Activated T-helper 1 cell treated with anti-CD3 and anti-CD28 coated beads, Interleukin-12 subunit alpha, Interleukin-12 subunit beta, Interleukin-2, Interleukin-4 antibody, amounts not matched to agents 30 ng/mL and 10 ng/mL and 1 ng/mL, durations not matched to agents 14 hours and 24 hours and 36 hours (primary cell): ENCODE measurements at regions of chr1 and their contacts with region 1.

Region 1: DNA sequence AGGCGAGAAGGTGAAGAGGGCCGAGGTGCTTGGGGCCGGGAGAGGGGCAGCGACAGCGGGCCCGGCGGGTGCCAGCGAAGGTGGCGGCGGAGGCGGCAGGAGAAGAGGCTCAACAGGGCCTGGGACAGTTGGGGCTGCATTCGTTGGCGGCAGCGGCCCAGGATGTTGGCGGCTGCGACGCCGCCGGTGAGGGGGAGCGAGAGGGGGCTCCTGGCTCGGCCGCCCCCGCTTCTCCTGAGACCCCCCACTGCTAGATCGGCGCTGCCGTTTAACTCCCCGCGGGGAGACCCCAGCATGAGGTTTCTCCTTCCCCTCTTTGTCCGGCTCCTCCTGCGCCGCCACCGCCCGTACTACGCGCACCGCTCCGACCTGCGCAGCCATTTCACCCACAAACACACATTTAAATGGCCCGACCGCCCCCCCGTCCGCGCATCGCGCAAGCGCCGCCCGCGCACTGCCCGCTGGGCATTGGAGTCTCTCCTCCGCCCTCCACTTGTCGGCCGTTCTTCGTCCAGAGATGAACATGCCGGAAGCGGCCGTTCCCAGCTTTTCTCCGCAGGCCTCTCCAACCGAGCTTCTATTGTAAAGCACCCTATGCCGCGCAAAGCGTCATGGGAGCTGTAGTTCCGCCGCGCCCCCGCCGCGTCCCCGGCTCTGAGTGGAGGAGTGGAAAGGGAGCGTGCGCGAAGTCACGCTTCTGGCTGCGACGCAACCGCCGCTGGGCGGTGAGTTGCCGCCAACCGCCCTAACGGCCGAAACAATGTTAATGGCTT is at the start of gene RSBN1:
- DNase-seq: peak; percentile 99
- H3K4me3 Mint-ChIP-seq: peak within 1 kb of the TSS; percentile 96
- H3K27ac Mint-ChIP-seq: peak within 1 kb of the TSS; percentile 96
- H3K4me1 Mint-ChIP-seq: peaks cover 34% of the 10 kb centered on the region
- H3K27me3 Mint-ChIP-seq: no peaks in the 10 kb centered on the region
- total RNA-seq, gene RSBN1: 18.4 and 19.5 TPM in 2 replicates

Region 2: DNA sequence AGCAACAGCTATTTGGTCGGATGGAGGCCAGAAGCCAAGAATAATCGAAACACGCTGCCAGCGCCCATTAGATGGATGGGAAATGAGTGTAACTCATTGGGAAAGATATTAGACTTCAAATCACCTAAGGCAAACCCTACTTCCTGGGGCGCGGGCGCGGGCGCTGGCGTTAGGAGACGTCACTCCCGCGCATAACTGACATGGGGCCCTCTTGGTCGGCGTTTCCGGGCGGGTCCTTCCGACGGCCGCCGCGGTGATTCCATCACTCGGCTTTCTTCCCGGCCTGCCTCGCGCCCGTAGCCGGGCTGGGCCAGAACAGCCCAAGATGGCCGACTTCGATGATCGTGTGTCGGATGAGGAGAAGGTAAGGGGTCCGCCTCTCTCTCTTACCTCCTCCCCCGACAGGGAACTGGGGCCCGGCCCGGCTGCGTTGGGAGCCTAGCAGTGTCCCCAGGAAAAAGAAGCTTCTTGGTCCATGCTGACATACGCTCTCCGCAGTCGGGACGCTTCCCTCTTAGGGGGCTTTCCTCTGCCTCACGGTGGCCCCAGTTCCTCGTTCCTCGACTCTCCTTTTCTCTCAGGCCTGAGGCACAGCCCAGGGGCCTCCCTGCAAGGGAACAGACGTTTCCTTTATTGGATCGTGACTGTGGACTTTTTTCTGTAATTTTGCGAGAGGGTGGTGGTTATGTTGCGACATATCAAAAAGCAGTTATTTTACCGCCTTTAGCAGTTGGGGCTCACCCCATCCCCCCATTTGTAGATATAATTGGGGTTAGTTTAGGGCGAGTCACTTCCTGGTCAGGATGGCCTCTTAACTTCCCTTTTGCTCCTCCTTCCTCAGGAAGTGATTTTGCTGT is 1192.3 kb before region 1 on chr1 and contains the start of gene CAPZA1:
- intact Hi-C with region 1: loop called (anchors 5 kb)
- DNase-seq: peak; percentile 90
- H3K4me3 Mint-ChIP-seq: peak within 1 kb of the TSS; percentile 98
- H3K27ac Mint-ChIP-seq: peak within 1 kb of the TSS; percentile 98
- H3K4me1 Mint-ChIP-seq: peaks cover 48% of the 10 kb centered on the region
- H3K27me3 Mint-ChIP-seq: no peaks in the 10 kb centered on the region
- total RNA-seq, gene CAPZA1: 239 and 242 TPM in 2 replicates

Region 3: DNA sequence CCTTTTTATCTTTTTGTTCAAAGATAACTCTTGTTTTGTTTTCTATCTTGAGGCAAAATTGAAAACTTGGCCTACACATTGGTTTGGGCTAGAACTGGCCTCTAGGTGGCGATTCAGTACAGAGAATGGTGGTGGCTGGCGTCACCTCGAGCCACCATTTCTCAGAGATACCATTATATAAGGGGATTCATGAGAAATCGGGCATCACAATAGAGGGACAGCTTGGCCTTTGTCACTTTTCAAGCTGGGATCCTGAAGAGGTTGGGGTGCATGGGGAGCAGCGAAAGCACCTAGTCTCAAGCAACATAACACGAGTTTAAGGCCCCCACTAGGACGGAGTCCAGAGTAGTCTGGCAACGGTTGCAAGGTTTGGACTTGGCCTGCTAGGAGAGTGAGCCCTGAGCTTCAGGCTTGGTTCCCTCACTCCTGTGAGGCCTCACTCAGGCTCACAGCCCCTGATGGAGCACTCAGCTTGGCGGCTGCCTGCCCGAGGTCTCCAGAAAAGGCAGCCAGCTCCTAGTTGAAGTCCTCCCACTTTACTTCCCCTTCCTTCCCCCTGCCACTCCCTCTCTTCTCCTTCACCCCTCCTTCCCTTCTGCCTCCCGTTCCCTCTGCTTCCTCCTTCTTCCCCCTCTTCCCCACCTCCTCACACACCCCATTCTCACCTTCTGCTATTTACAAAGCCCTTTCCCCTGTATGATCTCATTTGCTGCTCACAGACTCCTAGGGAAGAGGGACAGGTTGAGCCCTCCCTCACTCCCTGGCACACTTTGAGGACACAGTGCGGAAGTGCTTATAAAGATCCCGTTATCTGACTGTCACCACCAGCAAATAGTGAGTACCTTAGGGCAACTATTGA is 671.3 kb before region 1 on chr1:
- intact Hi-C with region 1: loop called (anchors 5 kb)
- DNase-seq: peak; percentile 24
- H3K4me3 Mint-ChIP-seq: no peak overlapping the region
- H3K27ac Mint-ChIP-seq: no peak overlapping the region
- H3K4me1 Mint-ChIP-seq: peaks cover 15% of the 10 kb centered on the region
- H3K27me3 Mint-ChIP-seq: no peaks in the 10 kb centered on the region

Region 4: GRCh38 chr1:113783254-113784099 is 28.6 kb before region 1 on chr1:
- intact Hi-C with region 1: loop called (anchors 1 kb)
- DNase-seq: peak; percentile 41
- H3K4me3 Mint-ChIP-seq: peak overlapping the region; percentile 59
- H3K27ac Mint-ChIP-seq: peak overlapping the region; percentile 93
- H3K4me1 Mint-ChIP-seq: peaks cover 25% of the 10 kb centered on the region
- H3K27me3 Mint-ChIP-seq: no peaks in the 10 kb centered on the region

Region 5: GRCh38 chr1:113904674-113905434 is 92.8 kb after region 1 on chr1 and contains the starts of genes AP4B1 and DCLRE1B:
- intact Hi-C with region 1: loop called (anchors 1 kb)
- DNase-seq: peak; percentile 98
- H3K4me3 Mint-ChIP-seq: peak within 1 kb of the TSS; percentile 99
- H3K27ac Mint-ChIP-seq: peak within 1 kb of the TSS; percentile 95
- H3K4me1 Mint-ChIP-seq: peaks cover 58% of the 10 kb centered on the region
- H3K27me3 Mint-ChIP-seq: no peaks in the 10 kb centered on the region
- total RNA-seq, gene AP4B1: 36.3 and 40.9 TPM in 2 replicates
- total RNA-seq, gene DCLRE1B: 20.9 and 21.2 TPM in 2 replicates

Region 6: DNA sequence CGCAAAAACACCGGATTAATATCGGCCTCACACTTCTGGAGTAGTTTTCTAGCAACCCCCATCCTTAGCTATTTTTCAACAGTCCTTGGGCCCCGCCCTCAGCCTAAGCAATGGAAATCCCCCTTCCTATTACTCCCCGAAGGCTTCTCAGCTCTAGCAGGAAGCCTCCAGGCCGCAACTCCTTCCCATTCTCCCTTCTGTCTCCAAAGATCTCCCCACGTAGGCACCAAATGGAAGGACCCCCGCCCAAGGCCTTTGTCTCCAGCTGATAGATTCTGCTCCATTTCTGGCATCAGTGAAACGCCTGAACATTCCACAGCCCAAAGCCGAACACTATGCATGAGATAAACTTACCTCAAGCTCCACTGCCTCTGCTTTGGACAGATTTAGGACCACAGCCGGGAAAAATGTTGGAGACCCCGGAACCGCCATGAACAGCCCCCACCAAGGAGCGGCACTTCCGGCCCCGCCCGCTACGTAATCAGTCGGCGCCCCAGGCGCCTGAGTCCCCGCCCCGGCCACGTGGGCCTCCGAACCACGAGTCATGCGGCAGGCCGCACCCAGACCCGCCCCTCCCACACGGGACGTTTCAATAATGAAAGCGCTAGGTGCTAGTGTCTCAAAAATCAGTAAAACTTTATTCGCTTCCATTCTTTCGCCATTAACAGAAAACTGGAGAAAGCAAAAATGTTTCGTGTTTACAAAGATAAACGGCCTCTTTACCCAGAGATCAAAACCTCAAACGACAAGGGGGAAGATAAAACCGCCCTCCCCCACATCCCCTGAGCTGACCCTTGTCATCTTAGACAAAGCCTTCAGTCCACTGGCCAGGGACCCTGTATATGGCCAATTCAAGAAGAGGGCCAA is 904.5 kb after region 1 on chr1 and contains the start of gene NRAS:
- intact Hi-C with region 1: loop called (anchors 1 kb)
- DNase-seq: peak; percentile 93
- H3K4me3 Mint-ChIP-seq: peak within 1 kb of the TSS; percentile 99
- H3K27ac Mint-ChIP-seq: peak within 1 kb of the TSS; percentile 99
- H3K4me1 Mint-ChIP-seq: peaks cover 39% of the 10 kb centered on the region
- H3K27me3 Mint-ChIP-seq: no peaks in the 10 kb centered on the region
- total RNA-seq, gene NRAS: 57.5 and 62.1 TPM in 2 replicates